Heart right ventricle (tissue), 16 donors: ENCODE measurements at regions of chr4 and their contacts with region 1.

Region 1: GRCh38 chr4:138669479-138670315 is 345.9 kb upstream of the NOCT start:
- DNase-seq: no peak
- ATAC-seq: no peak
- H3K4me3 ChIP-seq: no peak overlapping the region
- H3K27ac ChIP-seq: no peak overlapping the region
- H3K4me1 ChIP-seq: peaks cover 0 to 29% (median 7%) of the 10 kb centered on the region in 9 donors
- H3K27me3 ChIP-seq: no peaks in the 10 kb centered on the region
- CTCF ChIP-seq: no peak

Region 2: DNA sequence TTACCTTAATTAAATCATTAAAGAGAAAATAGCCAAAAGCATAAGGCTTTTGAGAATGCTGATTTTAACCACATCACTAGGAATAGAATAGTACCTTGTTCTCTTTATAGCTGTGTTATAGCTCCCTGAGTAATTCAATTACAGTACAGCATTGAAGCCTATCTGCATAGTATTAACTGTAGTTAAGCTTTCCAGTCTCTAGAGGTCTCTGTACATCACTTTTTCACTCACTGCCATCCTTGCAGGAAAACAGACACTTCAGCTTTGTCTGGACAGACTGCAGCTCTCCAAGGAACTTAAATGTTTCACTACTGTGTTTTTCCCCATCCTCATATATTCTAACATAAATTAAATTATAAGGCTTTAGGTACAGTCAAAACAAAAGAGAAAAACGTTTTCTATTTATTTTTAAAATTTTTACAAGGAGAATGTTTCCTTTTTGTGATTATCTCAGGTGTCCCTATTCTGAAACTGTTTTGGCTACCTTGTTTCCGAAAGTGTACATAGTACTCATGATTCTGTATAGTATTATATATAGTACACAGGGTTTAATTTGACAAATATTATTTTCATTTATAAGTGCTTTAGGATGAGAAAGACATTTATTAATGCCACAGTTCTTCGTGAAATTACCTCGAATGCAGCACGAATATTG is 1545.3 kb before region 1 on chr4:
- intact Hi-C with region 1: loop called in 1 of 10 experiments (anchors 10 kb)
- DNase-seq: peak in 1 of 2 donors; percentile 5
- ATAC-seq: peak; percentile 78 to 97 (median 88)
- H3K4me3 ChIP-seq: peak overlapping the region; percentile 2 to 52 (median 30)
- H3K27ac ChIP-seq: peak overlapping the region in 1 of 10 donors; percentile 14
- H3K4me1 ChIP-seq: no peaks in the 10 kb centered on the region
- H3K27me3 ChIP-seq: no peaks in the 10 kb centered on the region
- CTCF ChIP-seq: peak in 8 of 9 donors; percentile 16 to 80 (median 64)

Region 3: DNA sequence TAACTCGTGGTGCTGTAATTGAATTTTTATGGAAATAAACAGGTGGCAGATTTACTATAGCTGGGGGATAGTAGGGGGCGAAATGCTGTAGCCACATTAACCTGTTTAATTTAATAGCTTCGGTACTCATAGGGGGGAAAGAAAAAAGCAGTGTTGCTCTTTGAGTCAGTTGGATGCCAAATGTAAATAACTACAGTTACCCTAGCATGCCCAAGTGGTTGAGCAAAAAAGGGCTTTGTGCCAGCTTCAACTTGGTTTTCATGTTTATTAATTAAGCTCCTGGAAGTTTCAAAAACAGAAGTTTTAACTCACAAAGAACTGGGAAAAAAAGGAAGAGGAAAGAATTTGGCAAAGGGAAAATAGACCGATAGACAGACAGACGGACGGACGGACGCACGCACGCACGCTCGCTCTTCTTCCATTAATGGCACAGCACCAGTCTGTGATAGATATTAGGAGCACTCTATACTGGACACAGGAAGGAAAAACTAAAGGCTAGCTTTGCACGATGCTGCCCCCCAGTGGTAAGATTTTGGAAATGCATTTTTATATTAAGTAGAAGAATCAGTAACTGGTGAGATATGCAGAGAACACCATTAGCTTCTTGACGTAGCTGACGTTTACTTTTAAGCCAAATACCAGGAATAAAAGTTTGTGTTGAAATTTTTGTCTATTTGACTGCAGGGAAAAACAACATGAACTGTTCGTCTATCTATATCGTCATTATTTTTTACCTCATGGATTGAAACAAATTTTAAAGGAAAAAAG is 579.4 kb before region 1 on chr4:
- intact Hi-C with region 1: loop called in 1 of 10 experiments (anchors 10 kb)
- DNase-seq: peak; percentile 14 to 61
- ATAC-seq: peak; percentile 65 to 85 (median 80)
- H3K4me3 ChIP-seq: peak overlapping the region in 4 of 10 donors; percentile 24 to 26 (median 25)
- H3K27ac ChIP-seq: no peak overlapping the region
- H3K4me1 ChIP-seq: peaks cover 0 to 8% (median 0%) of the 10 kb centered on the region in 9 donors
- H3K27me3 ChIP-seq: no peaks in the 10 kb centered on the region
- CTCF ChIP-seq: peak; percentile 73 to 85 (median 85)

Region 4: DNA sequence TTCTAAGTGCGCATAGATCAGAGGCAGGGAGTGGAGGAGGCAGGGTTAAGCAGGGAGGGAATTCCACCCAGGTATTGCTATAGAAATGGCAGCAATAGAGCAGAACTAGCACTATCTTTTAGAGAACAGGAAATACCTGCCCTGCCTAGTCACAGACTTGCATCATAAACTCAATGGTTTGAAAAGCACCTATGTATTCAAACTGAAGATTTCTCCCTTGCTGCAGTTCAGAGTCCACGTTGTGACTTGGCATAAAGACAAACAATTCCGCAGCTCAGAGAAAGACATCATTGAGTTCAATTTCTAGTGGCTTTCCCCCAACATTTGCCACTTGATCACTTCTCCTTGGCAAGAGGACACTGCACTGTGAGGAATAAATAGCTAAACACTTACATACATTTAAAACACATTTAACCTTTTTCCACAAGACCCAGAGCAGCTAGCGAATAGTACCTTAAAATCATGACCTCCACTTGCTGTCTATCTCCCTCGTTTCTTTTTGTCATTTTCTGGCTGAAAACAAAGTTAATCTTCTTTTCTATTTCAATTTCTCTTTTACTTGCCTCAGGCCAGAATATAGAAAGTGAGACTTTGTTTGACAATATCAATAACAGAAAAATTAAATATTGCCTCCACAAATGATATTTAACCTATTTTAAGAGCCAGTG is 470.0 kb before region 1 on chr4:
- intact Hi-C with region 1: loop called in 1 of 10 experiments (anchors 10 kb)
- DNase-seq: no peak
- ATAC-seq: peak in 1 of 8 donors; percentile 50
- H3K4me3 ChIP-seq: no peak overlapping the region
- H3K27ac ChIP-seq: peak overlapping the region in 2 of 10 donors; percentile 1 to 7
- H3K4me1 ChIP-seq: peaks cover 0 to 7% (median 0%) of the 10 kb centered on the region in 9 donors
- H3K27me3 ChIP-seq: no peaks in the 10 kb centered on the region
- CTCF ChIP-seq: no peak

Region 5: DNA sequence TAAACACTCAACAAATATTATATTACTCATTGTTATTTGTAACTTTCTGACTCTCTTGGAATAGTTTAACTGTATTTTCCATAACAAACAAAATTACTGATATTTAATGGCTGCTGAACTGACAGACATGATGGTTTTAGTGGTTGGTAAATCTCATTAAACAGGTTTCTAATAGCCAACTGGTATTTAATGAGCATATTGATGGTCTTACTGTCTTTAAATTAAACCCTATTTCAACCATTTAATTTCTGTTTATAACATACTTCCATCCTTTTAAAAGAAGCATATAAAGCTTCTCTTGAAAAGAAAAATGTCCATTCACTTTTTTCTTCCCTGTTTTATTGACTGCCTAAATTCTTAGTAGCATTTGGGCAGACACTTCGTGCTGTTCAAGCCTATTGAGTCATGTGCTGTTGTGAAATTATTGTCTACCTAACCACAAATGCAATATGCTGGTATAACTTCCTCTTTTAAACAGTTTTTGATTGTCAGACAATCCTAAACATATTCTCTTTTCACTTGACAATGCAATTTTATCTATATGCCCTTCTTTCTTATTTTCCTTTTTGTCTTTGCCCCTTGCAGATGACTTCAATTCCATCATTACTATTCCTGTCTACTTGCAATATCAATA is 263.6 kb before region 1 on chr4:
- intact Hi-C with region 1: loop called in 1 of 10 experiments (anchors 10 kb)
- DNase-seq: no peak
- ATAC-seq: peak in 3 of 8 donors; percentile 35 to 42 (median 35)
- H3K4me3 ChIP-seq: no peak overlapping the region
- H3K27ac ChIP-seq: peak overlapping the region in 1 of 10 donors; percentile 39
- H3K4me1 ChIP-seq: peaks cover 0 to 30% (median 4%) of the 10 kb centered on the region in 9 donors
- H3K27me3 ChIP-seq: no peaks in the 10 kb centered on the region
- CTCF ChIP-seq: no peak

Region 6: DNA sequence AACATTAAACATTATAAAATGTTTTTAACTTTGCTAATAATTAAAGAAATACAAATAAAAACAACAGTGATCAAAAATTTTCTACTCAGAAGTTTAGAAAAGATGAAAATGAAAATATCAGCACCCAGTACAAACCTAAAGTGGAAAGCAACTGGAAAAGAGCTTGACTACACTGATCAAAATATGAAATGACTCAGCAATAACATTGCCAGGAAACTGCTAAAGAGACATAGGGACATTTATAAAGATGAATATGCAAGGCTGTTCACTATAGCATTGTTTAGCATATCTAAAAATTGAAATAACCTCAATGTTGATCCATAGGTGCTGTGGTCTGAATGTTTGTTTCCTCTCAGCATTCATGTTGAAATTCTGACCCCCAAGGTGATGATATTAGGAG is 257.4 kb after region 1 on chr4:
- intact Hi-C with region 1: no loop called
- DNase-seq: no peak
- ATAC-seq: no peak
- H3K4me3 ChIP-seq: no peak overlapping the region
- H3K27ac ChIP-seq: no peak overlapping the region
- H3K4me1 ChIP-seq: no peaks in the 10 kb centered on the region
- H3K27me3 ChIP-seq: no peaks in the 10 kb centered on the region
- CTCF ChIP-seq: no peak